Left lung (tissue), 14 donors: ENCODE measurements at regions of chr15 and their contacts with region 1.

Region 1: DNA sequence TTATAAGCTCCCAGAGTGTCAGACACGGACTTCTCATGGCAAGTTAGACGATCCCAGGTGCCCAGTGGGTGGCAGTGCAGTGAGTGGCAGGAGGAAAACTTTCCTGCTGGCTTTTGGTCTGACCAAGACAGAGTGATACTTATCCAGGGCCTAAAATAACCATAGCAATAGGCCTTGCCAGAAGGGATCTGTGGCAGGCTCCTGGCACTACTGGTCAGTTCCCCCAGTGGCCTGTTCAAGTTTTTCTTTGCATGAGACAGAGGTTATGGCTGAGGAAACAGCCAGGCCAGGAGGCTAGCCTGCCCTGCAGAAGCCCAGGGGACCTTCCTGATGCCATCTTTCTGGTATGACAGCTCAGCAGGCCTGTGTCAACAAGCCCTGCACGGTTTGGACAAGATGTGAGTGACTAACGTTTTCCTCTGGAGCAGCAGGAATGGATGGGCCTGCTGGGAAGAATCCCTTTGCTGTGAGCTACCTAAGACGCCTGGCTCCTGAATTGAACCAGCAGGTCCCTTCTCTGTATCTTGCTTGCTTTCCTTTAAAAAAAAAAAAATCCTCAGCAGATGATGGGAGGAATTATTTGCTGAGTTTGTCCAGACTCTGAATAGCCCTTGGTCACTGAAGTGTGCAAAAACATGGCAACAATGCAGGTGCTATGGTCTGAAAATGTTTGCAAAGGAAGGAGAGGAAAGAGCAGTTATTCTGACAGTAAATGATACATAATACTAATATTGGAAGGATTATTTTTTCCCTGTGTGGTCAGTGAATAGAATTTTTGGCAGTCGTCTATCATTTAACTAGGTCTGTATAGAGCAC is 18.0 kb downstream of the SCG5 start:
- DNase-seq: no peak
- ATAC-seq: peak; percentile 51
- H3K4me3 ChIP-seq: no peak overlapping the region
- H3K27ac ChIP-seq: no peak overlapping the region
- H3K4me1 ChIP-seq: no peaks in the 10 kb centered on the region
- H3K27me3 ChIP-seq: no peaks in the 10 kb centered on the region
- CTCF ChIP-seq: no peak

Region 2: GRCh38 chr15:32994810-32995424 is 335.4 kb after region 1 on chr15:
- intact Hi-C with region 1: loop called in 1 of 2 experiments (anchors 10 kb)
- DNase-seq: peak in 2 of 4 donors; percentile 24 to 37
- ATAC-seq: peak; percentile 59
- H3K4me3 ChIP-seq: no peak overlapping the region
- H3K27ac ChIP-seq: no peak overlapping the region
- H3K4me1 ChIP-seq: no peaks in the 10 kb centered on the region
- H3K27me3 ChIP-seq: no peaks in the 10 kb centered on the region
- CTCF ChIP-seq: peak; percentile 46 to 56